HEK293 (cell line): ENCODE measurements at regions of chr22 and their contacts with region 1.

Region 1: GRCh38 chr22:22342697-22343580 is 98.4 kb downstream of the VPREB1 start:
- H3K4me3 ChIP-seq: no peak overlapping the region
- H3K27ac ChIP-seq: no peak overlapping the region
- H3K4me1 ChIP-seq: no peaks in the 10 kb centered on the region
- CTCF ChIP-seq: no peak

Region 2: GRCh38 chr22:22327723-22328122 is 15.2 kb before region 1 on chr22:
- CTCF ChIA-PET with region 1: interaction called, 45 read pairs
- POLR2A ChIA-PET with region 1: interaction called, 3 read pairs
- H3K4me3 ChIP-seq: no peak overlapping the region
- H3K27ac ChIP-seq: no peak overlapping the region
- H3K4me1 ChIP-seq: no peaks in the 10 kb centered on the region
- CTCF ChIP-seq: no peak

Region 3: DNA sequence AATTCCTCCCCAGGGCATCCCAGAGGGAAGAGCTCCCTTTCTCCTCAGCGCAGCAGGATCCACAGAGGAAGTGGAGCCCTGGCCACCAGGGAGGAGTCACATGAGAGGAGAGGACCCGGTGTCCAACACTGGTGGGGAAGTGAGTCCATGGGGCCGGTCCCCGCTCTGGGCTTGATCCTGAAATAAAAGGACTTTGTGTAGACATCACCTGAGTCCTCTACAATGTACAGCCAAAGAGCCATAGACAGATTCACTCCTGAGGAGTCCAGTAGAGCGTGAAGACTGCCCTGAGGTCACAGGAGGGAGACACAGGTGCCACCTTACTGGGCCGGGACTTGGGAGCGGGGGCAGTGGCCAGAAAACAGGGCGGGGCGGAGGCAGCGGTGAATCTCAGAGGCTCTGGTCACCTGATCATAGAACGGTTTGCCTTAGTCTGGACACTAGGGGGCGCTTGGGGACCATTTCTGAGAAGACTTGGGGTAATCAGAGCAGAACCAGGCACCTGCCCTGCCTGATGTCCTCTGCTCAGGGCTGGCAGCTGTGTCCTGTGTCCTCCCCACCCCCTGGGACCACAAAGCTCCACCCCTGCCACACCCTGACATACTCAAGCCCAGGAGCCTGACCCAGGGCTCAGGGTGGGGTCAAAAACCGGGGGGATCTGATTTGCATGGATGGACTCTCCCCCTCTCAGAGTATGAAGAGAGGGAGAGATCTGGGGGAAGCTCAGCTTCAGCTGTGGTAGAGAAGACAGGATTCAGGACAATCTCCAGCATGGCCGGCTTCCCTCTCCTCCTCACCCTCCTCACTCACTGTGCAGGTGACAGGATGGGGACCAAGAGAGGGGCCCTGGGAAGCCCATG is 14.3 kb after region 1 on chr22:
- CTCF ChIA-PET with region 1: interaction called, 16 read pairs
- POLR2A ChIA-PET with region 1: no interaction called
- H3K4me3 ChIP-seq: peak overlapping the region; percentile 22
- H3K27ac ChIP-seq: no peak overlapping the region
- H3K4me1 ChIP-seq: no peaks in the 10 kb centered on the region
- CTCF ChIP-seq: peak; percentile 79

Region 4: DNA sequence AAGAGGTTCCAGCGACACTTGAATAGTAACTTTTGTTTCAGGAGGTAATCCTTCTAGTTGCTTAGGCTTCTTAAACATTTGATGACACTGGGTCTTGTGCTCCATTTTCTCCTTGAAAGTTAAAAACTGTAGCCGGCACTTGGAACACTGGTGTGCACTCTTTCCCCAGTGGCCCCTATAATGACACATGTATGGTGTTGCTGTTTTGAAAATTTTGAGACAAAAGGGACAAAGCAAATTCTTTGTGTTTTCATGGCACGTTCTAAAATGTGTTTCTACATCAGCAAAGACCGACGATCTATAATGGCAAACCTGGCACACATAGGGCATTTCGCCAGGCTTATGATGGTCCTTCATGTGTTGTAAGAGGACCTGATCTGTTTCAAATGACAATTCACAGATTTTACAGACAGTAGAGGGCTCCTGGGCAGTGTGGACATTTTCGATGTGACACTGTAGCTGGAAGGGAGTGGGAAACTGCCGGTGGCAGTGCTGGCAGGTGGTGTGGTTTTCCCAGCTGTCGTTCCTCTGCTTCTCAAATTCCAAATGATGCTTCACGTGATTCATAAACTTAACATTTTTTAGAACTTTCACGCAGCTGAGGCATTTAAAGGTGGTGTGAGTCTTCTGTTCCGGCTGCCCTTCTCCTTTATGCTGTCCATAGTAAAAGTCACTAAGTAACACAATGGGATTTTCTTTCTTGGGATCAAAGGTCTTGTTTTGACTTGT is 145.1 kb after region 1 on chr22:
- CTCF ChIA-PET with region 1: no interaction called
- POLR2A ChIA-PET with region 1: no interaction called
- H3K4me3 ChIP-seq: no peak overlapping the region
- H3K27ac ChIP-seq: no peak overlapping the region
- H3K4me1 ChIP-seq: no peaks in the 10 kb centered on the region
- CTCF ChIP-seq: no peak

Region 5: DNA sequence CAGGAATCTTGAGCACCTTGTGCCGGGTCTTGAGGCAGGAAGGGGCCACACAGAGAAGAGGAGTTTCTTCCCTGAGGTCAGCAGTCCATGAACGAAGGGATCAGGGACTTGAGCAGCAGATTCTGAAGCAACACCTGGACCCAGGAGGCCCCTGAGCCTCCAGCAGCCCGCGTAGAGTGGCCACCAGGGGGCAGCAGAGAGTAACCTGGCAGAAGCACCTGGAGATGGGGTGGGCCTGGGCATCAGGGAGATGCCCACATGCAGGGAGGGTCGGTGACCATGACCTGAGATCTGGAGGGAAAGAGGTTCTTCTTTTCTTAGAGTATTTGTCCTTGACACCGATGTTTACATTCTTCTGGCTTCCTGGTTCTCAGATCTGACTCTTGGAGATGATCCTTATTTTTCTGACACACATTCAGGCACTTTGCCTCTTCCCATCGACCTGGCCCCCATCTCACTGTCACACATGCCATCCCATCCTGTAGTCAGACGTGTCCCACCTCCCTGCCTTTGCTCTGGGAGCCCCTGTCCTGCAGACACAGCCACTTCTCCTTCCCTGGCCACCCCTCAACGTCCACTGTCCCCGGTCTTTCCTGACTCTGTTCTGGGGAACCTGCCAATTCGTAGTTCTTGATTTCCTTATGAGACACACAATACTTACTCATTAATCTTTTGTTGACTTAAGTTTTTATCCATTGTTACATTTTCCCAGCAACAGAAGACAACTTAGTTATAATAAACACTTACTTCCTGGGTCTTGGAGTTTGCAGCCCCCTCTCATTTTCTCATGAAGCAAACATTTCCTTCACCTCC is 368.0 kb after region 1 on chr22:
- CTCF ChIA-PET with region 1: no interaction called
- POLR2A ChIA-PET with region 1: no interaction called
- H3K4me3 ChIP-seq: no peak overlapping the region
- H3K27ac ChIP-seq: no peak overlapping the region
- H3K4me1 ChIP-seq: no peaks in the 10 kb centered on the region
- CTCF ChIP-seq: peak; percentile 56; the same call in 1 of the 2 replicates